IMR-90 (cell line): ENCODE measurements at regions of chr11 and their contacts with region 1.

Region 1: GRCh38 chr11:34585735-34586487 is 35.0 kb upstream of the EHF start:
- DNase-seq: peak; percentile 71
- ATAC-seq: peak; percentile 94
- H3K4me3 ChIP-seq: no peak overlapping the region
- H3K27ac ChIP-seq: no peak overlapping the region
- H3K4me1 ChIP-seq: peaks cover 4% of the 10 kb centered on the region
- H3K27me3 ChIP-seq: peaks cover 7% of the 10 kb centered on the region
- CTCF ChIP-seq: peak; percentile 79
- POLR2A ChIP-seq: no peak
- RAD21 ChIP-seq: peak; percentile 91

Region 2: DNA sequence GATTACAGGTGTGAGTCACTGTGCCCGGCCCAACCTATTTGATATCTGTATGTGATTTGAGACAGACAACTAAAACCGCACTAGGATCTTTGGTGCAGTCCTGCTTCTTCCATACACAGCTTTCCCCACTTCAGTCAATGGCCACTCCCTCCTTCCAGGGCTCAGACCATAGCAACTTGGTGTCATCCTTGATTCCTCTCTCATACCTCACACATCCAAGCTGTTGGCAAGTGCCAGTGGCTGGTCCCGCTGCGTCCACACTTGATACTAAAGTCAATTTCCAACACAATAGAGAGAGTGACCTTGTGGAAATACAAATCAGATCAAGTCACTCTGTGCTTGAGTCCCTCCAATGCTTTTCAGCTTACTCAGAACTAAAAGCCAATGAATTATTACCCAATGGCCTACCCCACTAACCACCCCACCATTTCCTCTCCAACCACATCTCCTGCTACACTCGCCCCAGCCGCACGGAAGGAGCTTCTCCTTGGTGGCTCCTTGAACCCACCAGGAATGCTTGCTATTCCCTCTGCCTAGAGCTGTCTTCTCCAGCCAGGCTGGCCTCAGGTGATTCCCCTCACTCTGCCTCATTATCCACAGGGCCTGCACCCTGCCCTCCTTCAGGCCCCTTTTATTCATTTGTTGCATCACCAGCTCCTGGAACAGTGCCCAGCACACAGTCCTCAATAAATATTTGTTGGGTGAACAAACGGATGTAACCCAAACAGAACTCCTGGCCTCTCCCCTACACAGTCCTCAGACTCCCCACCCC is 241.0 kb before region 1 on chr11:
- CTCF ChIA-PET with region 1: no interaction called
- POLR2A ChIA-PET with region 1: no interaction called
- dilution Hi-C with region 1: no loop called
- in situ Hi-C with region 1: no loop called
- intact Hi-C with region 1: no loop called
- DNase-seq: peak; percentile 66
- ATAC-seq: peak; percentile 39
- H3K4me3 ChIP-seq: no peak overlapping the region
- H3K27ac ChIP-seq: no peak overlapping the region
- H3K4me1 ChIP-seq: peaks cover 27% of the 10 kb centered on the region
- H3K27me3 ChIP-seq: peaks cover 8% of the 10 kb centered on the region
- CTCF ChIP-seq: no peak
- POLR2A ChIP-seq: no peak
- RAD21 ChIP-seq: no peak

Region 3: GRCh38 chr11:34653826-34654490 is 68.0 kb after region 1 on chr11:
- CTCF ChIA-PET with region 1: interaction called, 14 read pairs
- POLR2A ChIA-PET with region 1: no interaction called
- dilution Hi-C with region 1: no loop called
- in situ Hi-C with region 1: no loop called
- intact Hi-C with region 1: no loop called
- DNase-seq: peak; percentile 99
- ATAC-seq: peak; percentile 86
- H3K4me3 ChIP-seq: no peak overlapping the region
- H3K27ac ChIP-seq: peak overlapping the region; percentile 77
- H3K4me1 ChIP-seq: peaks cover 11% of the 10 kb centered on the region
- H3K27me3 ChIP-seq: no peaks in the 10 kb centered on the region
- CTCF ChIP-seq: peak; percentile 32; the same call in 1 of the 2 replicates
- POLR2A ChIP-seq: no peak
- RAD21 ChIP-seq: peak; percentile 43

Region 4: DNA sequence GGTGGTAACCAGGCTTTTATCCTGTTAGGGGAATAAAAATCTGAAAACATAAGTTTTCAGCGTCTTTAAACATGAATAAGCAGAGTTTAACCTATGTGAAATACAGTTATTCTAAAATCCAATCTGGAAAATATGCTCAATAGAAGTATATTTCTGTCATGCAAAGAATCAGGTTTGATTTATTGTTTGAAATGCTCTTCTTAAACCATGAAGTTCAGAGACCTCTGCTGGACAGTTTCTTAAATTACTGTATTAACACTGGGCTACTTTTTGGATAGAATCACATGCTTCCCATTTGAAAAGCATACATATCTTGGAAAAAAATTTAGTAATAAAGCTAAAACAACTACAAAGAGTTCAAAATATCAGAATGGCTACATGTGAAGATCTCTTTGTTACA is 304.9 kb after region 1 on chr11:
- CTCF ChIA-PET with region 1: interaction called, 21 read pairs
- POLR2A ChIA-PET with region 1: no interaction called
- dilution Hi-C with region 1: no loop called
- in situ Hi-C with region 1: loop called (anchors 5 kb)
- intact Hi-C with region 1: loop called (anchors 1 kb)
- DNase-seq: peak; percentile 55
- ATAC-seq: peak; percentile 48
- H3K4me3 ChIP-seq: no peak overlapping the region
- H3K27ac ChIP-seq: no peak overlapping the region
- H3K4me1 ChIP-seq: no peaks in the 10 kb centered on the region
- H3K27me3 ChIP-seq: no peaks in the 10 kb centered on the region
- CTCF ChIP-seq: peak; percentile 63
- POLR2A ChIP-seq: no peak
- RAD21 ChIP-seq: peak; percentile 77

Region 5: GRCh38 chr11:34997952-34998528 is 412.1 kb after region 1 on chr11:
- CTCF ChIA-PET with region 1: interaction called, 3 read pairs
- POLR2A ChIA-PET with region 1: no interaction called
- dilution Hi-C with region 1: no loop called
- in situ Hi-C with region 1: no loop called
- intact Hi-C with region 1: loop called (anchors 10 kb)
- DNase-seq: peak; percentile 58
- ATAC-seq: peak; percentile 63
- H3K4me3 ChIP-seq: no peak overlapping the region
- H3K27ac ChIP-seq: no peak overlapping the region
- H3K4me1 ChIP-seq: peaks cover 2% of the 10 kb centered on the region
- H3K27me3 ChIP-seq: no peaks in the 10 kb centered on the region
- CTCF ChIP-seq: peak; percentile 63
- POLR2A ChIP-seq: no peak
- RAD21 ChIP-seq: peak; percentile 74

Region 6: GRCh38 chr11:35144136-35144741 is 558.3 kb after region 1 on chr11:
- CTCF ChIA-PET with region 1: no interaction called
- POLR2A ChIA-PET with region 1: no interaction called
- dilution Hi-C with region 1: no loop called
- in situ Hi-C with region 1: no loop called
- intact Hi-C with region 1: loop called (anchors 10 kb)
- DNase-seq: peak; percentile 84
- ATAC-seq: peak; percentile 10; the same call in 1 of the 2 replicates
- H3K4me3 ChIP-seq: peak overlapping the region; percentile 9; the same call in 1 of the 2 replicates
- H3K27ac ChIP-seq: peak overlapping the region; percentile 86
- H3K4me1 ChIP-seq: peaks cover 33% of the 10 kb centered on the region
- H3K27me3 ChIP-seq: no peaks in the 10 kb centered on the region
- CTCF ChIP-seq: no peak
- POLR2A ChIP-seq: no peak
- RAD21 ChIP-seq: no peak

Region 7: GRCh38 chr11:35165423-35166368 is 579.8 kb after region 1 on chr11:
- CTCF ChIA-PET with region 1: no interaction called
- POLR2A ChIA-PET with region 1: no interaction called
- dilution Hi-C with region 1: no loop called
- in situ Hi-C with region 1: loop called (anchors 25 kb)
- intact Hi-C with region 1: no loop called
- DNase-seq: peak; percentile 50
- ATAC-seq: no peak
- H3K4me3 ChIP-seq: no peak overlapping the region
- H3K27ac ChIP-seq: peak overlapping the region; percentile 70
- H3K4me1 ChIP-seq: peaks cover 52% of the 10 kb centered on the region
- H3K27me3 ChIP-seq: no peaks in the 10 kb centered on the region
- CTCF ChIP-seq: no peak
- POLR2A ChIP-seq: no peak
- RAD21 ChIP-seq: no peak

Region 8: GRCh38 chr11:35412285-35412684 is 826.4 kb after region 1 on chr11:
- CTCF ChIA-PET with region 1: no interaction called
- POLR2A ChIA-PET with region 1: no interaction called
- dilution Hi-C with region 1: no loop called
- in situ Hi-C with region 1: loop called (anchors 5 kb)
- intact Hi-C with region 1: no loop called
- DNase-seq: peak; percentile 25
- ATAC-seq: peak; percentile 66
- H3K4me3 ChIP-seq: no peak overlapping the region
- H3K27ac ChIP-seq: no peak overlapping the region
- H3K4me1 ChIP-seq: no peaks in the 10 kb centered on the region
- H3K27me3 ChIP-seq: peaks cover 3% of the 10 kb centered on the region
- CTCF ChIP-seq: peak; percentile 43
- POLR2A ChIP-seq: no peak
- RAD21 ChIP-seq: peak; percentile 59